ENCODE measurements at regions of chr6 and their contacts with region 1.

Region 1: DNA sequence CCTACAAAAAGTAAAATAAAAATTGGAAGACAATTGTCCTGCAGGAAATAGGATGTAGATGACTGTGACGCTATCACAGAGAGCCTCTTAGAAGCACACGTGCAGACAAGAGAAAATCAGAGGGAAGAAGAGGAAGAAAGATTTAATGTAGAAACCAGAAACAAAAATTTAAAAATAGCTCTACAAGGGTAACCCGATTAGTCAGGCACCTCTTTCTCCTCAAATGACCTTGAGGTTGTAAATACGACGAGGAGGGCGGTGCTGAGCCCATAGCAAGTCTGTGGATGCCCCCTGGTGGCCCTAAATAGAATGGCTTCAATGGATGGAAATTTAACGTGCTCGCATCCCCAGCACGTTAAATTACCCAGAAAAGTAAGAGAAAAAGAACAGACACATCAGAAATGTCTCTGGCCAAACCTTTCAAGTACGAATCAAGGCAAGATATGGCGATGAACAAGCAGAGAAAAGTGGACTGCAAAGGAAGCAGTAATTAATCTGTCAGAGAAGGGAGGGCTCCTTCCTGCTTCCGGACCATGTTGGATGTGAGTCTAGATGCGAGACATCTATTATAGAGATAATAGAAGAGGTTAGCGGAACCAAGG is 4.2 kb upstream of the PRPH2 start:
- DNase-seq: peak; percentile 87 to 92 (median 90)
- ATAC-seq: peak; percentile 90
- H3K4me3 ChIP-seq: no peak overlapping the region
- H3K27ac ChIP-seq: no peak overlapping the region
- H3K4me1 ChIP-seq: peaks cover 6 to 8% of the 10 kb centered on the region in 2 experiments; a peak in 4 of 5 replicates
- H3K27me3 ChIP-seq: peaks cover 7 to 11% of the 10 kb centered on the region in 2 experiments
- CTCF ChIP-seq: peak; percentile 94 to 98 (median 98)
- EP300 ChIP-seq: peak; percentile 27; the same call in 1 of the 2 replicates
- POLR2A ChIP-seq: no peak
- RAD21 ChIP-seq: peak; percentile 99

Region 2: DNA sequence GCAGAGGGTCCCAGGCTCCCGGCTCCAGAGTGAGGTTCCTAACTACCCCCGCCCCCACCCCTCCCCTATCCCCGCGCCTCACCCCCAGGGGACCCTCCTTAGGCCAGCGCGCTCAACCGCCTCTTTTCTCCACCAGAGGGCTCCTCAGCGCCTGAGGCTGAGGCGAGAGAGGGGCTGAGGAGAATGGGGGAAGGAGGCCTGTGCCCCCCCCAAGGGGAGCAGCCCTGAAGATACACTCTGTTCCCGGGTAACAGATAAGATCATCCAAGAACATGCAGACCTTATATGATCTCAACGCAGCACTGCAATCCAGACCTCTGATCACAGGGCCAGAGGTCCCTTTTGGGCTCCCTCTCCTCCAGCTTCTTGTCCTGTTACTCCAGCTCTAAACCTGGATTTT is 465.6 kb before region 1 on chr6:
- CTCF ChIA-PET with region 1: no interaction called
- POLR2A ChIA-PET with region 1: no interaction called
- in situ Hi-C with region 1: no loop called
- intact Hi-C with region 1: loop called (anchors 10 kb)
- DNase-seq: peak; percentile 57 to 82 (median 81)
- ATAC-seq: peak; percentile 90
- H3K4me3 ChIP-seq: no peak overlapping the region
- H3K27ac ChIP-seq: no peak overlapping the region
- H3K4me1 ChIP-seq: peaks cover 9 to 21% of the 10 kb centered on the region in 2 experiments
- H3K27me3 ChIP-seq: peaks cover 38 to 47% of the 10 kb centered on the region in 2 experiments
- CTCF ChIP-seq: peak; percentile 49 to 73 (median 54)
- EP300 ChIP-seq: no peak
- POLR2A ChIP-seq: no peak
- RAD21 ChIP-seq: peak; percentile 44 to 63

Region 3: GRCh38 chr6:42563697-42564505 is 162.7 kb before region 1 on chr6 and contains the start of gene UBR2:
- CTCF ChIA-PET with region 1: interaction called, 4 read pairs
- POLR2A ChIA-PET with region 1: interaction called, 3 read pairs
- in situ Hi-C with region 1: no loop called
- intact Hi-C with region 1: loop called (anchors 2 kb)
- DNase-seq: peak; percentile 91 to 100 (median 94)
- ATAC-seq: peak; percentile 95
- H3K4me3 ChIP-seq: peak within 1 kb of the TSS; percentile 61
- H3K27ac ChIP-seq: peak within 1 kb of the TSS; percentile 84
- H3K4me1 ChIP-seq: peaks cover 4% of the 10 kb centered on the region in 2 experiments; a peak in 4 of 5 replicates
- H3K27me3 ChIP-seq: no peaks in the 10 kb centered on the region
- CTCF ChIP-seq: peak; percentile 42 to 67 (median 61)
- EP300 ChIP-seq: peak; percentile 63; the same call in 1 of the 2 replicates
- POLR2A ChIP-seq: peak; percentile 95
- RAD21 ChIP-seq: 0 out of 4 replicates have a peak, but pooled peaks of 1 of the 2 experiments have one; percentile 3
- polyA plus RNA-seq, gene UBR2: 9.1 to 13.1 TPM

Region 4: GRCh38 chr6:42661540-42662153 is 64.9 kb before region 1 on chr6:
- CTCF ChIA-PET with region 1: interaction called, 40 read pairs
- POLR2A ChIA-PET with region 1: interaction called, 4 read pairs
- in situ Hi-C with region 1: no loop called
- intact Hi-C with region 1: loop called (anchors 1 kb)
- DNase-seq: peak; percentile 68 to 84 (median 70)
- ATAC-seq: peak; percentile 97
- H3K4me3 ChIP-seq: no peak overlapping the region
- H3K27ac ChIP-seq: no peak overlapping the region
- H3K4me1 ChIP-seq: no peaks in the 10 kb centered on the region
- H3K27me3 ChIP-seq: no peaks in the 10 kb centered on the region
- CTCF ChIP-seq: peak; percentile 80 to 94 (median 89)
- EP300 ChIP-seq: 0 out of 2 replicates have a peak, but pooled peaks have one; percentile 7
- POLR2A ChIP-seq: no peak
- RAD21 ChIP-seq: peak; percentile 87 to 88

Region 5: DNA sequence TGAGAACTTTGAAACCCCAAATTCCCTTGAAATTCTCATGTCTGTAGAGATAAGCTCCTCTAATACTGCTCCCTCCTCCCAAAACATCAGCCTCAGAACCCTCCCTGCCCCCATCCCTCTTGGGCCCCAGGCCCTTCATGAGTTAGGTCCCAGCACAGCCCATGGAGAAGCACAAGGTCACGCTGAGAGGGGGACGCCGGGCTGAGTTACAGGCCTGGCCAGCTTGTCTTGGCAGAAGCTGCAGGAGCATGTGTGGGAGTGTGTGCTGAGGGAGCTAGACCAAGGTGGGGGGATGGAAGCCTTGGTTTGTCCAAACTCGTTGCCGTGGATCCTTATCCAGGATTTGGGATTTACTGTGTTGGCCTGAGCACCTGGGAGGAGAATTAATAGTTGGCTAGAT is 180.8 kb after region 1 on chr6:
- CTCF ChIA-PET with region 1: no interaction called
- POLR2A ChIA-PET with region 1: no interaction called
- in situ Hi-C with region 1: no loop called
- intact Hi-C with region 1: no loop called
- DNase-seq: peak in 2 of 4 experiments; percentile 22 to 34
- ATAC-seq: peak; percentile 57
- H3K4me3 ChIP-seq: no peak overlapping the region
- H3K27ac ChIP-seq: no peak overlapping the region
- H3K4me1 ChIP-seq: peaks cover 5 to 7% of the 10 kb centered on the region in 2 experiments; a peak in 4 of 5 replicates
- H3K27me3 ChIP-seq: no peaks in the 10 kb centered on the region
- CTCF ChIP-seq: no peak
- EP300 ChIP-seq: no peak
- POLR2A ChIP-seq: no peak
- RAD21 ChIP-seq: no peak

Measured in K562 (cell line).